Kidney (tissue), 22 donors: ENCODE measurements at regions of chr4 and their contacts with region 1.

Region 1: GRCh38 chr4:25767877-25768725 is 94.7 kb downstream of the SEL1L3 start:
- DNase-seq: peak in 4 of 5 donors; percentile 69 to 92 (median 82)
- H3K4me3 ChIP-seq: no peak overlapping the region
- H3K27ac ChIP-seq: no peak overlapping the region
- H3K4me1 ChIP-seq: peaks cover 0 to 2% (median 0%) of the 10 kb centered on the region in 3 donors
- H3K27me3 ChIP-seq: no peaks in the 10 kb centered on the region
- CTCF ChIP-seq: peak; percentile 76

Region 2: GRCh38 chr4:25439918-25440477 is 328.1 kb before region 1 on chr4:
- intact Hi-C with region 1: loop called (anchors 10 kb)
- DNase-seq: peak in 4 of 5 donors; percentile 55 to 76 (median 68)
- H3K4me3 ChIP-seq: no peak overlapping the region
- H3K27ac ChIP-seq: no peak overlapping the region
- H3K4me1 ChIP-seq: no peaks in the 10 kb centered on the region
- H3K27me3 ChIP-seq: no peaks in the 10 kb centered on the region
- CTCF ChIP-seq: peak; percentile 75

Region 3: DNA sequence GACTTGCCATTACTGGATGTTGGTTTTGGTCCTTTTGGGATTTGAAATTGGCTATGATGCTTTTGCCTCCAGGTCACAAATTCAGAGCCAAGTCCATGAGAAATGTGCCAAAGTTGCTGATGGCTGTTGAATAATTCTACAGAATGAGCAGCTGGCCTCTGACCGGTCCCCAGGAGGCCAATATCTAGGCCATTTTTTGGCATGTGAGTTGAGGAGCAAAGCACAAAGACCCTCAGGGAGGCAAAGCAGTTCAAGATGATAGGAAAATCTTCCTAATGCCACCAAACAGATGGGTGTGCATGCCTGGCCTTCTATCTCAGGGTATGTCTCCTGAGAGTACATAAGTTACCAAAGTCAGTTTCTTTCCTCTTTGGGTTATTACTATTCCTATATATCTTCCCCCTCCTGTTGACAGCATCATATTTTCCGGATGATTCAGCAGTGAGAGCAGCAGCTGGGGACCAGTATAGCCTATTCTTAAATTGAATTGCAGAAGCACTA is 50.3 kb after region 1 on chr4:
- intact Hi-C with region 1: no loop called
- DNase-seq: no peak
- H3K4me3 ChIP-seq: no peak overlapping the region
- H3K27ac ChIP-seq: no peak overlapping the region
- H3K4me1 ChIP-seq: no peaks in the 10 kb centered on the region
- H3K27me3 ChIP-seq: no peaks in the 10 kb centered on the region
- CTCF ChIP-seq: no peak